Activated naive CD4-positive, alpha-beta T cell treated with anti-CD3 and anti-CD28 coated beads for 36 hours (primary cell): ENCODE measurements at regions of chr4 and their contacts with region 1.

Region 1: GRCh38 chr4:183618681-183619080 is 40.3 kb downstream of the RWDD4 start:
- DNase-seq: no peak
- H3K4me3 Mint-ChIP-seq: no peak overlapping the region
- H3K27ac Mint-ChIP-seq: no peak overlapping the region
- H3K4me1 Mint-ChIP-seq: no peaks in the 10 kb centered on the region
- H3K27me3 Mint-ChIP-seq: peaks cover 2% of the 10 kb centered on the region

Region 2: DNA sequence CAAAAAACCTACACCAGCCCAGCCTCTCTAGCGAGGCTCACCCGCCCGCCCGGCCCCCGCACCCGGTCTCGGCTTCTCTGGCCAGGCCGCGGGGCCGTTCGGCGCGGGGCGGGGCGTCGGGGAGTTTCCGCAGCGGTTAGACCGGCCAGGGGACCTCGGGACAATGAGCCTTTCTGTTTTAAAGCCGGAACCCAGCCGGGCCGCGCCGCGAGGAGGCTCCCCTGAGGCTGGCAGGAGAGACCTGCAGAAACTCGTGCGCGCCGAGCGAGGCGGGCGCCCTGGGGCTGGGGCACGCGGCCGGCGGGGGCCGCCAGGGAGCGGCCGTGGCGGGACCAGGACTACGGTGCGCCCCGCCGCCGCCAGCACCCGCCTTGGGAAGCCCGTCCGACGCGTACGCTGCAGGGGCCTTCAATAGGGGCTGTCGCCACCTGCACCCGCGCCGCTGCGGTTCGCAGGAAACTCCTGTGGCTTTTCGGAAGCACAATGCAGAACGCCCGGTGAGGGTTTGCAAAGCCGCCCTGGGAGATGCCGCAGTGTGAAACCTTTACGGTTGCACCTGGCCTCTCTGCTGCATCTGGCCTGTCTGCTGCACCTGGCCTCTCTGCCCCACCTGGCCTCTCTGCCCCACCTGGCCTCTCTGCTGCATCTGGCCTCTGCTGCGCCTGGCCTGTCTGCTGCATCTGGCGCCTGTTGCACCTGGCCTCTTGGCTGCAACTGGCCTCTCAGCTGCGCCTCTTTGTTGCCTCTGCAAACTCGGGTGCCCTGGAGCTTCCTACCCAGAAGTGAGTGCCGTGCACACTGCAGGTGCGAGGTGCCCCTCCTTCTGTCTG is 104.3 kb after region 1 on chr4:
- CTCF ChIA-PET with region 1: interaction called, 3 read pairs
- intact Hi-C with region 1: loop called (anchors 1 kb)
- DNase-seq: peak; percentile 53
- H3K4me3 Mint-ChIP-seq: peak overlapping the region; percentile 72
- H3K27ac Mint-ChIP-seq: no peak overlapping the region
- H3K4me1 Mint-ChIP-seq: peaks cover 9% of the 10 kb centered on the region
- H3K27me3 Mint-ChIP-seq: peaks cover 12% of the 10 kb centered on the region